ENCODE measurements at regions of chr2 and their contacts with region 1.

Region 1: GRCh38 chr2:169798718-169799592 is at the start of gene SSB:
- DNase-seq: peak; percentile 95
- H3K4me3 ChIP-seq: peak within 1 kb of the TSS; percentile 87
- H3K27ac ChIP-seq: peak within 1 kb of the TSS; percentile 90
- H3K4me1 ChIP-seq: peaks cover 17% of the 10 kb centered on the region
- CTCF ChIP-seq: no peak
- total RNA-seq, gene SSB: 126 and 162 TPM in 2 replicates

Region 2: GRCh38 chr2:169694113-169694903 is 104.6 kb before region 1 on chr2 and contains the starts of genes CFAP210 and PHOSPHO2:
- CTCF ChIA-PET with region 1: no interaction called
- POLR2A ChIA-PET with region 1: interaction called, 5 read pairs
- intact Hi-C with region 1: loop called (anchors 1 kb)
- DNase-seq: peak; percentile 95
- H3K4me3 ChIP-seq: peak within 1 kb of the TSS; percentile 73
- H3K27ac ChIP-seq: peak within 1 kb of the TSS; percentile 13
- H3K4me1 ChIP-seq: peaks cover 16% of the 10 kb centered on the region
- CTCF ChIP-seq: no peak
- total RNA-seq, gene CFAP210: not detected in 2 replicates
- total RNA-seq, gene PHOSPHO2: 2.8 and 4.8 TPM in 2 replicates

Region 3: GRCh38 chr2:169824373-169825333 is 25.7 kb after region 1 on chr2 and contains the start of gene METTL5:
- CTCF ChIA-PET with region 1: no interaction called
- POLR2A ChIA-PET with region 1: interaction called, 7 read pairs
- intact Hi-C with region 1: loop called (anchors 2 kb)
- DNase-seq: peak; percentile 85
- H3K4me3 ChIP-seq: peak within 1 kb of the TSS; percentile 74
- H3K27ac ChIP-seq: peak within 1 kb of the TSS; percentile 24
- H3K4me1 ChIP-seq: peaks cover 38% of the 10 kb centered on the region
- CTCF ChIP-seq: peak; percentile 95
- total RNA-seq, gene METTL5: 52.3 and 56.7 TPM in 2 replicates

Measured in OCI-LY7 (cell line).